Cardiac septum (tissue), 1 donor: ENCODE measurements at regions of chr15 and their contacts with region 1.

Region 1: GRCh38 chr15:31326156-31326732 is 391 bp upstream of the KLF13 start:
- DNase-seq: peak; percentile 100

Region 2: GRCh38 chr15:31215490-31216214 is 110.6 kb before region 1 on chr15:
- intact Hi-C with region 1: loop called (anchors 1 kb)
- DNase-seq: peak; percentile 95

Region 3: GRCh38 chr15:31365655-31366127 is 39.4 kb after region 1 on chr15:
- intact Hi-C with region 1: loop called (anchors 2 kb)
- DNase-seq: peak; percentile 92

Region 4: DNA sequence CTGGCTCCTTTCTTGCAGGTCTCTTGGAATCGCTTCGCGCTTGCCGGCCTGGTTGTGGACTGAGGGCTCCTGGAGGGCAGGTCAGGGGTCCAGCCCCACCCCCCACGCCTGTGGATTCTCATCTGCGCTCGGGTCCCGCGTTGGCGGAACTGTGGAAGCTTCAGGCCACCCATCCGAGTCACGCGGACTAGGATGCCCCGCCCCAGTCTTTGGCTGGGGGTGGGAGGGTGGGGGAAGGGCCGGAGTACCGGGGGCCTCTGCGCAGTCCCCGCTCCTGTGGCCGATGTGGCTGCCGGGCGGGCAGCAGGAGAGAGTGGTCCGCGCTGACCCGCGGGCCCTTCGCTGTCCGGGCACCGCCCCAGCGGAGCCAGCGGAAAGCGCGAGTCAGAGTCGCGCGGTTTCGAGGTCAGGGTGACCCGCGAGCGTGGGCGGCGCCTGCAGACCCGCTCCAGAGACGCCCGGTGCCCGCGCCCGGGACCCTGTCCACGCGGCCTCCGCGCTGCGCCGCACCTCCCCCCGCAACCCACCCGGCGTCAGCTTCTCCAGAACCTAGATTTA is 114.6 kb after region 1 on chr15:
- intact Hi-C with region 1: loop called (anchors 2 kb)
- DNase-seq: peak; percentile 89